Naive thymus-derived CD4-positive, alpha-beta T cell (primary cell): ENCODE measurements at regions of chr1 and their contacts with region 1.

Region 1: GRCh38 chr1:35715568-35716002 is 3.1 kb downstream of the C1orf216 start:
- DNase-seq: peak; percentile 44 to 79 (median 66)
- ATAC-seq: peak; percentile 82
- H3K4me3 ChIP-seq: no peak overlapping the region
- H3K4me3 Mint-ChIP-seq: peak overlapping the region in 6 of 10 donors; percentile 0 to 53 (median 44)
- H3K27ac ChIP-seq: no peak overlapping the region
- H3K27ac Mint-ChIP-seq: peak overlapping the region in 3 of 9 donors; percentile 3 to 73 (median 59)
- H3K4me1 ChIP-seq: peaks cover 15 to 35% of the 10 kb centered on the region in 2 donors
- H3K4me1 Mint-ChIP-seq: peaks cover 26 to 34% (median 33%) of the 10 kb centered on the region in 7 donors
- H3K27me3 ChIP-seq: no peaks in the 10 kb centered on the region
- H3K27me3 Mint-ChIP-seq: no peaks in the 10 kb centered on the region

Region 2: DNA sequence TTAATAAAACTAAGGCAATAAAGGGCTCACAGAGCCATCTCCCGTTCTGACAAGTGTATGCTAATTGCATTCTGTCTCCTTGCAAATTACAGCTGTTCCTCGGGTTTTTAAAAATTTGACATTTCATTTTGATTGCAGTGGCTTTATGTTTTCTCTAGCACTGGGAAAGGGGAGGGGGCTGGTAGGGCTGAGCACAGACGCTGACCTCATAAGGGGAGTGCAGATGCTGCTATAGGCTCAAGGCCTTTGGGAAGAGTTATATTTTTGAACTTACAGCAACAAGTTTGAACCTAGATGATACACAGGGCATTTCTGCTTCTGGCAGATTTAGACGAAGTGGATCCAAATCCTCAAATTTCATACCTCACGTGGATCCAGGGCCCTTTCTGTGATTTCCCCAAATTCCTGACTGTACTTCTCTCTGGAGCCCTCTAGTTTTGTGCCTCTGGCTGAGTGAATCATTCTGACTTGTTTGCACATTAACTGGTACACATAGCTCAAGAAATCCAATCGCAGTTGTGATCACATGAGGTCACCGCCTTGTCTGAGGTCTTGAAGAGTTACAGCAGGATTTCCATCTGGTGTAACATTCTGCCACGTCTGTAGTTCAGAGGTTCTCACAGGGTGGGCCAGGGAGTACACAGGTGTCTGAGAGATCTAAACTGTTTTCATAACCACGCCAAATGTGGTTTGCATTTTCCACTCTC is 1308.6 kb before region 1 on chr1:
- CTCF ChIA-PET with region 1: no interaction called
- POLR2A ChIA-PET with region 1: no interaction called
- intact Hi-C with region 1: no loop called
- DNase-seq: no peak
- ATAC-seq: no peak
- H3K4me3 ChIP-seq: no peak overlapping the region
- H3K4me3 Mint-ChIP-seq: no peak overlapping the region
- H3K27ac ChIP-seq: no peak overlapping the region
- H3K27ac Mint-ChIP-seq: no peak overlapping the region
- H3K4me1 ChIP-seq: no peaks in the 10 kb centered on the region
- H3K4me1 Mint-ChIP-seq: no peaks in the 10 kb centered on the region
- H3K27me3 ChIP-seq: no peaks in the 10 kb centered on the region
- H3K27me3 Mint-ChIP-seq: peaks cover 0 to 41% (median 5%) of the 10 kb centered on the region in 5 donors

Region 3: DNA sequence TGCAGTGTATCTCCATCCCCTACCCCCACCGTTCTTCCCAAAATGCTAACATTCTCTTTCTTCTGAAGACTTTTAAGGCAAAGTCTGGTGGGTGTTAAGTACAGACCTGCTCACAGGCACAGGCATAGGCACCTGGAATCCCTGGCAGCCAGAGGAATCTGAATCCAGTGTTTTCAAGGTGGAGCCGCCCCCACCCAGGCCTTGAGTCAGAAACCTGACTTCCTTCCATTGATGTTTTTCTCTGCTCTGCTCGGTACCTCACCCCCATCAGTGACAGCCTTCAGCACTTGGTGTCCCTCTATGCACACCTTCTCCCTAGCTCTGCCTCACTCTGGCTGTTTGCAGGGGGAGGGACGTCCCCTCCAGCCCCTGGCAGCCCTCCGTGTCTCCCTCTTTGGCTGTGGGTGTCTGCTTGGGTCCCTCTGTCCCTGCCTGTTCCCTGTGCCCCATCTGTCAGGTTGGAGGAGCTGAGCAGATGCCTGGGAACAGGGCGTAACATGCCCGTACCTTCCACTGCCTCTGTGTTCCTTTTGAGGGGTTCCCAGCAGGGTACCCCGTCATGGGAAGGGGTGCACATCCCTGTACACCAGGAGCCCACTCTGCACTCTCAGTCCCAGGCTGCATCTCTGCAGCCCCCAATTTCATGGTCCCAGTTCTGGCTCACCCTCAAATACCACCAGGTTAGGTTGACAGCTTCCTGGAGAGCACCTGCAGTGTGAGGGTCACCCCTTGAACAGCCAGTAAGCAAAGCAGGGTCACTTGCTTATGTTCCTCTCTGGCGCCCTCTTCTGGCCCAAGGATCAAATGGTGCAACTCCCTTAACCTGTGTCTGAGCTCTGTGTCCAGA is 151.3 kb before region 1 on chr1:
- CTCF ChIA-PET with region 1: interaction called, 53 read pairs
- POLR2A ChIA-PET with region 1: interaction called, 8 read pairs
- intact Hi-C with region 1: loop called (anchors 1 kb)
- DNase-seq: peak; percentile 58 to 82 (median 70)
- ATAC-seq: peak; percentile 79
- H3K4me3 ChIP-seq: no peak overlapping the region
- H3K4me3 Mint-ChIP-seq: peak overlapping the region in 1 of 10 donors; percentile 56
- H3K27ac ChIP-seq: no peak overlapping the region
- H3K27ac Mint-ChIP-seq: peak overlapping the region in 7 of 9 donors; percentile 23 to 91 (median 60)
- H3K4me1 ChIP-seq: no peaks in the 10 kb centered on the region
- H3K4me1 Mint-ChIP-seq: peaks cover 25 to 41% (median 31%) of the 10 kb centered on the region in 7 donors
- H3K27me3 ChIP-seq: no peaks in the 10 kb centered on the region
- H3K27me3 Mint-ChIP-seq: no peaks in the 10 kb centered on the region

Region 4: GRCh38 chr1:35569936-35570335 is 145.6 kb before region 1 on chr1:
- CTCF ChIA-PET with region 1: interaction called, 53 read pairs
- POLR2A ChIA-PET with region 1: interaction called, 8 read pairs
- intact Hi-C with region 1: loop called (anchors 1 kb)
- DNase-seq: no peak
- ATAC-seq: no peak
- H3K4me3 ChIP-seq: no peak overlapping the region
- H3K4me3 Mint-ChIP-seq: no peak overlapping the region
- H3K27ac ChIP-seq: no peak overlapping the region
- H3K27ac Mint-ChIP-seq: no peak overlapping the region
- H3K4me1 ChIP-seq: no peaks in the 10 kb centered on the region
- H3K4me1 Mint-ChIP-seq: peaks cover 5 to 20% (median 13%) of the 10 kb centered on the region in 7 donors
- H3K27me3 ChIP-seq: no peaks in the 10 kb centered on the region
- H3K27me3 Mint-ChIP-seq: peaks cover 0 to 36% (median 0%) of the 10 kb centered on the region in 5 donors

Region 5: DNA sequence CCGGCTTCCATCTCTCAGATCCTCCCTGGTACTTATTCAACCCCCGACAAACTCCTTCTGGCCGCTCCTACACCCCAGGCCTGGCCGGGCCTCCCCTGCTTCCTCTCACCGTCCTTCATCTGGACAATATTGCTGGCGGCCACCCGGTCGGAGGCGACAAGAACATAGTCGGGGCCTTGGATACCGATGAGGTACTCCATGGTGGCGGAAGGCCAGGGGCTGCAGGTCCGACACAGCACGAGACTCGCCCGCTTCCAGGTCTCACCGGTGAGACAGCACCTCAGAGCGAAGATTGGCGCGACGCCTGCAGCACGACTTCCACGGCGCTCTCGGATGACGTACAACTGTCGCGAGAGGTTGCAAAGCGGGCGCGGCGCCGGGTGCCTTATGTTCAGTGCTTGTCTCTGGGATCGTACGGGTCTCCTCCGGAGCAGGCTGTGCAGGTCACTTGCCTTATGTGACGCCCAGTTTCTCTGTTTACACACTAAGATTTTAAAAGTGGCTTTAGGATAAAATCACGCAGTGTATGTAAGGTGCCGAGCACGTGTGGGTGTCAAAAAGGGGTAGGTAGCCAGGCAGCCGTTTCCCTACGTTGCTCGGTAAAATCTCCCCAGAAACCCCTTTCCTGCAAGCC is 74.2 kb before region 1 on chr1 and contains the start of gene PSMB2:
- CTCF ChIA-PET with region 1: no interaction called
- POLR2A ChIA-PET with region 1: no interaction called
- intact Hi-C with region 1: loop called (anchors 1 to 2 kb)
- DNase-seq: peak; percentile 89 to 96 (median 95)
- ATAC-seq: peak; percentile 97
- H3K4me3 ChIP-seq: peak within 1 kb of the TSS; percentile 89
- H3K4me3 Mint-ChIP-seq: peak within 1 kb of the TSS; percentile 97 to 100 (median 100)
- H3K27ac ChIP-seq: peak within 1 kb of the TSS; percentile 92
- H3K27ac Mint-ChIP-seq: peak within 1 kb of the TSS; percentile 98 to 100 (median 99)
- H3K4me1 ChIP-seq: peaks cover 18 to 19% of the 10 kb centered on the region in 2 donors
- H3K4me1 Mint-ChIP-seq: peaks cover 16 to 54% (median 42%) of the 10 kb centered on the region in 7 donors
- H3K27me3 ChIP-seq: no peaks in the 10 kb centered on the region
- H3K27me3 Mint-ChIP-seq: peaks cover 12 to 44% (median 30%) of the 10 kb centered on the region in 5 donors
- total RNA-seq, gene PSMB2: 20.4 to 93.5 (median 23.5) TPM

Region 6: DNA sequence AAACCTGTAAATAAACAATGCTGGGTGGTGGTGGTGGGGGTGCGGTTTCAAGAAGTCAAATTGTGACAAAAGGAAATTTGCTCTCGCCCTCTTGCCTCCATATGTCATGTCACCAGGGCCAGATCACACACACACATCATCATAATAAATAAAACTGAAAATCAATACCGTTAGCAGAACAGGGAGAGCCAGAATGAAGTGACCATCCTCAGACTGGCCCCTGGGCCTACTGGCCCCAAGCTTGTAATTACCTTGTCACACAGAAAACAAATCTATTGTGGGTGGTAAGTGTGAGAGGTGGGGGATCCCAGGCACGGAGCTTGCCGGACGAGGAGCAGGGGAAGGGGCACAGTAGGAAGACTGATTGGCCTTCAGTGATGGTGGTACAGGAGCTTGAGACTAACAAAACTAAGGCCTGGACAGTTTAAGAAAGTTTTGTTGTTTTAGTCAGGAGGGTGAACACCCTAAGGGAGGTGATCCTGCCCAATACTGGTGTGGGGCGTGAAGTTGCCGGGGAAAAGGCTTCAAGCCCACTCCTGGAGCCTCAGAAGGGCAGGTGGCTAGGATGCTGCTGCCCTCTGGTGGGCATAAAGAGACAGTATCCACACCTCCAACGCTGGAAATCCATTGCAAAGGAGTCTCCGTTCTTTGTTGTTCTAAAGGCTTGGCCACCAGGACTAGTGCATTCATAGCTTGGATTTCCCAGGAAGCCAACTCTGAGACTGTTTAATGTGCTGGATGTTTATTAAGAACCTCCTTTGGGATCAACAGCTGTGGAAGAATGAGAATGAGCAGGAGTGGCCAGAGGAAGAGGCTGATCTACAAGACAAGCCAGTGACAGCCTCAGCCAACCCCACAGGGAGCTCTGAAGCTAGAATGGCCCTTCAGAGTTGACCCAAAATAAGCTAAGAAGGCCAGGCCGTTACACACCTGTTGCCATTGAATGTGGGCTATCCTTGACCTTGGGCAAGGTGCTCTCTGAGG is 11.2 kb after region 1 on chr1:
- CTCF ChIA-PET with region 1: interaction called, 28 read pairs
- POLR2A ChIA-PET with region 1: no interaction called
- intact Hi-C with region 1: no loop called
- DNase-seq: peak in 8 of 9 donors; percentile 16 to 59 (median 45)
- ATAC-seq: peak; percentile 90
- H3K4me3 ChIP-seq: no peak overlapping the region
- H3K4me3 Mint-ChIP-seq: no peak overlapping the region
- H3K27ac ChIP-seq: no peak overlapping the region
- H3K27ac Mint-ChIP-seq: no peak overlapping the region
- H3K4me1 ChIP-seq: no peaks in the 10 kb centered on the region
- H3K4me1 Mint-ChIP-seq: peaks cover 0 to 5% (median 0%) of the 10 kb centered on the region in 7 donors
- H3K27me3 ChIP-seq: no peaks in the 10 kb centered on the region
- H3K27me3 Mint-ChIP-seq: no peaks in the 10 kb centered on the region

Region 7: GRCh38 chr1:35988237-35988636 is 272.7 kb after region 1 on chr1:
- CTCF ChIA-PET with region 1: no interaction called
- POLR2A ChIA-PET with region 1: no interaction called
- intact Hi-C with region 1: no loop called
- DNase-seq: no peak
- ATAC-seq: no peak
- H3K4me3 ChIP-seq: no peak overlapping the region
- H3K4me3 Mint-ChIP-seq: no peak overlapping the region
- H3K27ac ChIP-seq: no peak overlapping the region
- H3K27ac Mint-ChIP-seq: no peak overlapping the region
- H3K4me1 ChIP-seq: no peaks in the 10 kb centered on the region
- H3K4me1 Mint-ChIP-seq: peaks cover 0 to 4% (median 0%) of the 10 kb centered on the region in 7 donors
- H3K27me3 ChIP-seq: no peaks in the 10 kb centered on the region
- H3K27me3 Mint-ChIP-seq: no peaks in the 10 kb centered on the region